Activated CD4-positive, alpha-beta memory T cell treated with anti-CD3 and anti-CD28 coated beads for 36 hours (primary cell): ENCODE measurements at regions of chr4 and their contacts with region 1.

Region 1: GRCh38 chr4:147793569-147794313 is 61.9 kb downstream of the ARHGAP10 start:
- DNase-seq: peak; percentile 21
- H3K4me3 Mint-ChIP-seq: peak overlapping the region; percentile 16
- H3K27ac Mint-ChIP-seq: peak overlapping the region; percentile 50
- H3K4me1 Mint-ChIP-seq: peaks cover 37% of the 10 kb centered on the region
- H3K27me3 Mint-ChIP-seq: no peaks in the 10 kb centered on the region

Region 2: DNA sequence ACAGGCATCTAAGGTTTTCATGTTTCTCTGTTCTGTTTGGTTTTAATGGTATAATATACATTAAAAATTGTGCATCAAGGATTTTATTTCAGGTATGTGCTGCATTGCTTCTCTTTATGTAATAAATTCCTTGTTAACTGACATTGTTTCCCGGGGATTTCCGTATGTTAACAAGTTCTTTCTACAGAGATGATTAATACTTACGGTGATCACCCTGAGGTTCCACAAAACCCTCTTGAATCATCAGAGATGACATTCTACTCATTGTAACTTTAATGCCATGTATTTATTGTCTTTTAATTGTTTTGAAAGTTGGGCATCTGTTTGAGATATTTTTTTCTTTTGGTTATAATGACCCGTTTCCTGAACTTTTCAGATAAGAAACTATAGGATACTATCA is 24.4 kb before region 1 on chr4:
- CTCF ChIA-PET with region 1: no interaction called
- POLR2A ChIA-PET with region 1: no interaction called
- intact Hi-C with region 1: loop called (anchors 1 kb)
- DNase-seq: no peak
- H3K4me3 Mint-ChIP-seq: no peak overlapping the region
- H3K27ac Mint-ChIP-seq: no peak overlapping the region
- H3K4me1 Mint-ChIP-seq: peaks cover 17% of the 10 kb centered on the region
- H3K27me3 Mint-ChIP-seq: no peaks in the 10 kb centered on the region

Region 3: DNA sequence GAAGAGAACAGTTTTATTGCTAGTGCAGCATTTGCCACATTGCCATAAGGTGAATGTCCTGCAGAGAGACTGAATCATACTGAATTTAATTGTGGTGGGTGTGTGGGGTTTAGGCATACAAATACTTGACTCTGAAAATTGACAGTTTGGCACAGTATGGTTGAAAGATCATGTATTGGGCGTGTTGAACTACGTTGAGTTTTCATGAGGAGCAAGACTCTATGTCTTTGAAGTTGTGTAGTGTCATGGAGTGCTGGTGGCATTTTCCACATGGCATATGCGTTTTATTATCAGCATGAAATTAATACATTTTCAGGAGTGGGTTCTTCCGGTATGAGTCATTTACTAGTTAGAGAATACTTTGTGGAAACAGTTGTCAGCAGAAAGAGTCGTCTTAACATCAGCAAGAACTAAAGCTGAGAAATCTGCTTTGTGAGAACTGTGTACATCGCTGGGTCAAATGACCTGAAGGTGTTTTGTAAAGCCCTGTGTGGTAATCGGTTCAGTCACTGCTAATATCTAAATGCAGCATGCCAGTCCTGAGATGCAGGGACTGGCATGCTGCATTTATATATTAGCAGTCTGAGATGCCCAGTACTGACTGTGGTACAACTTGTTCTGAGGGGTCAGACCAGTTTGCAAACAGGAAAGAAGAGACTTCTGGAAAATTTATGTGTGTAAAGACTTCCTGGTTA is 11.5 kb before region 1 on chr4:
- CTCF ChIA-PET with region 1: interaction called, 3 read pairs
- POLR2A ChIA-PET with region 1: no interaction called
- intact Hi-C with region 1: loop called (anchors 1 kb)
- DNase-seq: no peak
- H3K4me3 Mint-ChIP-seq: no peak overlapping the region
- H3K27ac Mint-ChIP-seq: peak overlapping the region; percentile 55
- H3K4me1 Mint-ChIP-seq: peaks cover 59% of the 10 kb centered on the region
- H3K27me3 Mint-ChIP-seq: no peaks in the 10 kb centered on the region

Region 4: DNA sequence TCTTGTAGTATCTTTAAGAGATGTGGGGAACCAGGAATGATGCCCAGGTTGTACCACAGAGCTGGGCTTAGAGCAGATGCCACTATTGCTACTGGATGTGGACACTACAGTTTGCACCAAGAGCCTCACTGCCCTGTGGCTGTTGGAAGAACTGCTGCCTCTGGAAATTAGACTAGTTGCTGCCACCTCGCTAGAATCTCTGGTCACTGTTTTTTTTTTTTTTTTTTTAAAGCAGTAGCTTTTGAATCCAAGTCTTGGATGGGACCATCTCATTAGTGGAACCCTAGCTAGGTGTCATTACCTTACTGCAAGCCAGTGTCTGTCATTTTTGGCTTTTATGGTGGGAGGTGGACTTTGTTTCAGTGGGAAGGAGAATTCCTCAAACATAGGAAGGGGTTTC is 43.7 kb after region 1 on chr4:
- CTCF ChIA-PET with region 1: no interaction called
- POLR2A ChIA-PET with region 1: no interaction called
- intact Hi-C with region 1: loop called (anchors 5 kb)
- DNase-seq: no peak
- H3K4me3 Mint-ChIP-seq: no peak overlapping the region
- H3K27ac Mint-ChIP-seq: no peak overlapping the region
- H3K4me1 Mint-ChIP-seq: peaks cover 22% of the 10 kb centered on the region
- H3K27me3 Mint-ChIP-seq: no peaks in the 10 kb centered on the region

Region 5: DNA sequence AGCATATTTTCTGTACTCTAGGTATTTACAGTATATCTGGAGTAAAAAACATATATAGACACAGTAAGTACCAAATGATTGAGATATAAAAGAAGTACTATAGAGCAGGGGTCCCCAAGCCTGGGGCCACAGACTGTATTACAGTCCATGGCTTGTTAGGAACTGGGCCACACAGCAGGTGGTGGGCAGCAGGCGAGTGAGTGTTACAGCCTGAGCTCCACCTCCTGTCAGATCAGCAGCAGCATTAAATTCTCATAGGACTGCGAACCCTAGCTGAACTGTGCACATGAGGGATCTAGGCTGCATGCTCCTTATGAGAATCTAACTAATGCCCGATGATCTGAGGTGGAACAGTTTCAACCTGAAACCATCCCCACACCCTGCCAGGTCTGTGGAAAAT is 347.8 kb after region 1 on chr4:
- CTCF ChIA-PET with region 1: no interaction called
- POLR2A ChIA-PET with region 1: no interaction called
- intact Hi-C with region 1: no loop called
- DNase-seq: no peak
- H3K4me3 Mint-ChIP-seq: no peak overlapping the region
- H3K27ac Mint-ChIP-seq: no peak overlapping the region
- H3K4me1 Mint-ChIP-seq: no peaks in the 10 kb centered on the region
- H3K27me3 Mint-ChIP-seq: no peaks in the 10 kb centered on the region

Region 6: GRCh38 chr4:148330161-148330560 is 536.4 kb after region 1 on chr4:
- CTCF ChIA-PET with region 1: no interaction called
- POLR2A ChIA-PET with region 1: no interaction called
- intact Hi-C with region 1: no loop called
- DNase-seq: no peak
- H3K4me3 Mint-ChIP-seq: no peak overlapping the region
- H3K27ac Mint-ChIP-seq: no peak overlapping the region
- H3K4me1 Mint-ChIP-seq: peaks cover 15% of the 10 kb centered on the region
- H3K27me3 Mint-ChIP-seq: no peaks in the 10 kb centered on the region